ENCODE measurements at regions of chr2 and their contacts with region 1.

Region 1: DNA sequence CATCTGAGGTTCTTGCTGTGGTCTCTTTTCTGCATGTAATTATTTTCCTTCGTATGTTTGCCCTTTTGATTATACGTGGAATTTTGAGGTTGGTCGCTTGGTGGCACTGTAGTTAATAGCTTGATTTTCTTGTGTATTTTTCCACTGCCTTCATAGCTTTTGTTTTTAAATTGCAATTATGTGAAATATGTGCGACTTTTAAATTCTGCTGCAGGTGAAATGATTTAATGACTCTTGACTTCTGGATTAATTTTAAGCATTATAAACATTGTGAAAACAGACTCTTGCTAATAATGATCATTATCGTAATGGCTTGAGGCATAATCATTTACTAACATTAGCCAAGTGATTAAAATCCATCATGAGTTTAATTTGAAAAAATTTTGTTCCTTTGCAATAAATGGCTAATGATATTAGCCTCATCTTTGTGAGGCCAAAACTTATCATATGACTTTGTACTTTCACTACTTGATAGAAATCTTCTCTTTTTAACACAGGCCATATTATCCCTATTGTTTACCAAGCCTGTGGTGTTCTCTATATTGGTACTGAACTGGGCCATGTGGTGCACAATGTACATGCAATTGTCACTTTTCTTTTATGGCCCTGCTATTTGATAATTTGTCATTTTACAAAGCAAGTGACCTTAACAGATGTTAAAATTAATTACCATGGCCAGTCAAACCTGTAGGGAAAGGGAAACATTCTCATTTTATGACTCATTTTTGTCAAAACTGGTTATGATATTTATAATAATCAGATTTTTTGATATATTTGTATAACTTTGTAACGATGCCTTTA is 62.8 kb upstream of the NEUROD1 start:
- DNase-seq: no peak
- H3K4me3 ChIP-seq: no peak overlapping the region
- H3K27ac ChIP-seq: no peak overlapping the region
- H3K4me1 ChIP-seq: peaks cover 0 to 10% (median 0%) of the 10 kb centered on the region in 4 donors
- H3K27me3 ChIP-seq: no peaks in the 10 kb centered on the region
- CTCF ChIP-seq: peak; percentile 67 to 72 (median 67)
- EP300 ChIP-seq: no peak
- POLR2A ChIP-seq: no peak

Region 2: DNA sequence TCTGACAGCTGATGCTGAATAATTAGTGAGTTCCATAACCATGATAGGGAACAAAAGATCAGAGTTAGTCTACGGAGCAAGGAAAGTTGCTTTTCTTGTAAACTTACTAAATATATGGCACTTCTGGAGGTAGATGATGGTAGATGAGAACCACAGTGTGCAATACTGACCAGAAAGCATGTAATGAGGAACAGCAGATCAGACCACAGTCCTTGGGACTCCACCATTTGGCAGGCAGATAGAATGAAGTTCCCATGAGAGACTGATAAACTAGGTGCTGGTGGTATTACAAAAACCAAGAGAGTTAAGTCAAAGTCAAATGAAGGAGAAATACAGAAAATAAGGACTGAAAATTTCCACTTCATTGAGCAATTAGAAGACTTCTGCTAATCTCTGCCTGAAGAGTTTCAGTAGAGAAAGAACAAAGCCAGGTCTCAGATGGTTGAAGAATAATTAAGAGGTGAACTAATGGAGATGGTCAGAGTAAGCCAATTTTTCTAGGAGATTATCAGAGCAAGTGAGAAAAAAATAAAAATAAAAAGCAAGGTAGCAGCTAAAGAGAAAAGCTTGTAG is 96.6 kb before region 1 on chr2:
- intact Hi-C with region 1: no loop called
- DNase-seq: no peak
- H3K4me3 ChIP-seq: no peak overlapping the region
- H3K27ac ChIP-seq: no peak overlapping the region
- H3K4me1 ChIP-seq: no peaks in the 10 kb centered on the region
- H3K27me3 ChIP-seq: peaks cover 0 to 9% (median 0%) of the 10 kb centered on the region in 4 donors
- CTCF ChIP-seq: no peak
- EP300 ChIP-seq: no peak
- POLR2A ChIP-seq: no peak

Region 3: DNA sequence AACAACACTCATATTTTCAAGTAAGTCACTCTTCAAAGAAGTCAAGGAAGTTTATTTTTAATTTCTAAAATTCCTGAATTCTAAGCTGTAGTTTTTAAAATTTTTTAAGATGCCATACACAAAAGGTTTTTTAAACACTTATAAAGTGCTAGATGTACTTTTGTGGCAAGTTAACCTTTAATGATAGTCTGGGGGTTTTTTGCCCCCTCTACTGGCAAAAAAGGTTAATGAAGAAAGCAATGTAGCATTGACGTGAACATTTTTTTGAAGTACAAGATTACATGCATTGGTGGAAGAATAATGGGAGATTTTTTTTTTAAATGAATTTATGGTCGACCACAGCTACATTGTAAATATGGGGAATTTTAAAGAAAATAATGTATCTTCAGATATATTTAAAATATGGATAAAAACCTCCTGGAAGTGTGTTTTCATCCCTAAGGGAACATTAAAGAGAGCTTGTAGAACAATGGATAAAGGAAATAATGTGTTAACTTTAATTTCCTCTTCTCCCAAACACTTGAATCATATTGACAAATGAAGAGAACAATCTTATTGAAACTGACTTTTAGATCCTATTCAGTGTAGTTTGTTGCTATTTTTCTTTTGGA is 161.0 kb after region 1 on chr2:
- intact Hi-C with region 1: loop called (anchors 2 kb)
- DNase-seq: no peak
- H3K4me3 ChIP-seq: no peak overlapping the region
- H3K27ac ChIP-seq: no peak overlapping the region
- H3K4me1 ChIP-seq: peaks cover 7 to 65% (median 52%) of the 10 kb centered on the region in 4 donors
- H3K27me3 ChIP-seq: no peaks in the 10 kb centered on the region
- CTCF ChIP-seq: peak; percentile 45 to 61 (median 61)
- EP300 ChIP-seq: no peak
- POLR2A ChIP-seq: no peak

Region 4: GRCh38 chr2:181953881-181954537 is 210.9 kb after region 1 on chr2:
- intact Hi-C with region 1: loop called (anchors 5 kb)
- DNase-seq: no peak
- H3K4me3 ChIP-seq: peak overlapping the region; percentile 36 to 51 (median 38)
- H3K27ac ChIP-seq: no peak overlapping the region
- H3K4me1 ChIP-seq: peaks cover 0 to 15% (median 4%) of the 10 kb centered on the region in 4 donors
- H3K27me3 ChIP-seq: no peaks in the 10 kb centered on the region
- CTCF ChIP-seq: peak; percentile 44 to 71 (median 60)
- EP300 ChIP-seq: no peak
- POLR2A ChIP-seq: no peak

Measured in esophagus muscularis mucosa (tissue), 4 donors.